ENCODE measurements at regions of chr11 and their contacts with region 1.

Region 1: DNA sequence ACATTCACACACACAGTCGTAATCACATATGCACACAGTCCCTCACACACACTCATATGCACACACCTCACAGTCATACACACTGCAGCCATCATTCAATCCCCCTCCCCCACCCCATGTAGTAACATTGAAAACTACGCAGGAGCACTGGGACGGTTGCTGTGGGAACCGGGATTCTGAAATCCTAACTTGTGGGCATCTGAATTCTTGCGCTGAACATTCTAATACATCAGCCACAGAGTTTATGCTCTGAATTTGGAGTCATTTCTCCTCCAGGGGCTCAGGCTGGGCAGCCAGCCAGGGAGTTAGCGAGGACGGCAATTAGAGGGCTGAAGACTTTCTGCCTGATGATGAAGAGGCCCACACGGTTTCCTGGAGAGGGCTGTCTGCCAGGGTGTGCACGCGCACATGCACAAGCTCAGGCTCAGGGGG is 32.7 kb downstream of the CD6 start:
- DNase-seq: peak; percentile 65
- ATAC-seq: peak; percentile 64
- H3K4me3 Mint-ChIP-seq: peak overlapping the region; percentile 67
- H3K27ac Mint-ChIP-seq: peak overlapping the region; percentile 93
- H3K4me1 Mint-ChIP-seq: peaks cover 80% of the 10 kb centered on the region
- H3K27me3 Mint-ChIP-seq: no peaks in the 10 kb centered on the region
- CTCF ChIP-seq: no peak

Region 2: DNA sequence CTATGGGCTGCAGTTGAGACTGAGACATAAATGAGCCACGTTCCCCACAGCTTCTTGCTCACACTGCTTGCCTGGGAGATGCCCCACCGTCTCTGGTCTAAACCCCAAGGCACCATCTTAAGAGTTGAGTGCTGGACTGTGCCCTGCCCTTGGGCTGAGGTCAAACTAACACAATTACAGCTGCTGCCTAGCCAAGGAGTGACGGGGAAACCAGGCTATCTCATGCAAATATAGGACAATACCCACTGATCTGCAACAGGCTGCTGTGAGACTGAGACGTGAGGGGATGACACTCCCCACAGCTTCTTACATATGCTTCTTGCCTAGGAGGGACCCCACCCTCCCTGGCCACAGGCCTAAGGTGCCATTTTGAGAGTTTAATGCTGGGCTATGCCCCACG is 312.5 kb before region 1 on chr11:
- CTCF ChIA-PET with region 1: no interaction called
- POLR2A ChIA-PET with region 1: no interaction called
- intact Hi-C with region 1: no loop called
- DNase-seq: no peak
- ATAC-seq: no peak
- H3K4me3 Mint-ChIP-seq: no peak overlapping the region
- H3K27ac Mint-ChIP-seq: no peak overlapping the region
- H3K4me1 Mint-ChIP-seq: no peaks in the 10 kb centered on the region
- H3K27me3 Mint-ChIP-seq: peaks cover 1% of the 10 kb centered on the region
- CTCF ChIP-seq: no peak

Region 3: GRCh38 chr11:61021661-61022212 is 17.5 kb after region 1 on chr11:
- CTCF ChIA-PET with region 1: interaction called, 3 read pairs
- POLR2A ChIA-PET with region 1: interaction called, 79 read pairs
- intact Hi-C with region 1: no loop called
- DNase-seq: peak; percentile 92
- ATAC-seq: peak; percentile 63
- H3K4me3 Mint-ChIP-seq: peak overlapping the region; percentile 64
- H3K27ac Mint-ChIP-seq: peak overlapping the region; percentile 88
- H3K4me1 Mint-ChIP-seq: peaks cover 81% of the 10 kb centered on the region
- H3K27me3 Mint-ChIP-seq: no peaks in the 10 kb centered on the region
- CTCF ChIP-seq: no peak

Region 4: DNA sequence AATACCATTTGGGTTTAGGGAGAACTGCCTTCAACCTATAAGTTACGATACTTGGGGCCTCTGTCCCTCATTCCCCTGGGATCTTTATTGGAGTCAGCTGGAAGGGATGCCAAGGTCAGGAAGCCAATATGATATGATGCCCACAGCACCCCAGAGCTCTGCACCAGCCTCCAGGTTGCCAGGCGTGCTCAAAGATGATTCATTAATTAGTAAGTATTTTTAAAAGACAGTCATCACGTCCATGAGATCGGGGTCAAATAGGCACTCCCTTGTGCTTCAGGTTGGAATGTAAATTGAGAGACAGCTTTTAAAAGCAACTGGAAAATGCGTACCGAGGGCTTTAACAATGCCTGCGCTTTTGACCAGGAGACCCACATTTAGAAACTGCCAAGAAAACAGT is 41.1 kb after region 1 on chr11:
- CTCF ChIA-PET with region 1: no interaction called
- POLR2A ChIA-PET with region 1: no interaction called
- intact Hi-C with region 1: no loop called
- DNase-seq: no peak
- ATAC-seq: no peak
- H3K4me3 Mint-ChIP-seq: no peak overlapping the region
- H3K27ac Mint-ChIP-seq: no peak overlapping the region
- H3K4me1 Mint-ChIP-seq: peaks cover 58% of the 10 kb centered on the region
- H3K27me3 Mint-ChIP-seq: no peaks in the 10 kb centered on the region
- CTCF ChIP-seq: no peak

Measured in activated CD8-positive, alpha-beta T cell treated with anti-CD3 and anti-CD28 coated beads for 36 hours (primary cell).